ENCODE measurements at regions of chr14 and their contacts with region 1.

Region 1: DNA sequence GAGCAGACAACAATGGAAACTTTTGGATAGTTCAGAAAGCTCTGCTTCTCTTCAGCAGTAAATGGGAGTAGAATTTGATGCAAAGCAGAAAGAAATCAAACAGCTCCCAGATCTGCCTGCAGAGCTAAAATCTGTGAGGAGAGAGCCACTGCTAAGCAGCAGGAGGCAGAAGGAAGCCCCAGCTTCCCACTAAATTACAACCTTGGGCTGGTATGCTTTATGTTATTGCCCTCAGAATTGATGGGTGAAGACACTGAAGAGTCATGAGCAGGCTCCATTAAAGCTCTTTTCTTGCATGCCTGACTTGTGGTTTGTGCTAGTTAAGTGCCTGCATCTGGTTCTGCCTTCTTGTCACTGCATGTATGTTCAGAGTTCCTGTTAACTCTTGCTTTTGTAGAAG is 8.4 kb downstream of the ZC2HC1C start:
- DNase-seq: peak in 1 of 14 experiments; percentile 18
- ATAC-seq: peak; percentile 95
- H3K4me3 ChIP-seq: no peak overlapping the region
- H3K4me3 Mint-ChIP-seq: peak overlapping the region; percentile 68
- H3K27ac ChIP-seq: no peak overlapping the region
- H3K27ac Mint-ChIP-seq: peak overlapping the region; percentile 90
- H3K4me1 ChIP-seq: no peaks in the 10 kb centered on the region
- H3K4me1 Mint-ChIP-seq: peaks cover 31% of the 10 kb centered on the region
- H3K27me3 ChIP-seq: no peaks in the 10 kb centered on the region
- H3K27me3 Mint-ChIP-seq: no peaks in the 10 kb centered on the region
- CTCF ChIP-seq: no peak

Region 2: GRCh38 chr14:75044322-75044721 is 33.5 kb before region 1 on chr14:
- CTCF ChIA-PET with region 1: no interaction called
- POLR2A ChIA-PET with region 1: interaction called, 4 read pairs
- intact Hi-C with region 1: loop called in 1 of 2 experiments (anchors 5 kb)
- DNase-seq: no peak
- ATAC-seq: no peak
- H3K4me3 ChIP-seq: no peak overlapping the region
- H3K4me3 Mint-ChIP-seq: peak overlapping the region; percentile 38
- H3K27ac ChIP-seq: no peak overlapping the region
- H3K27ac Mint-ChIP-seq: no peak overlapping the region
- H3K4me1 ChIP-seq: peaks cover 2% of the 10 kb centered on the region
- H3K4me1 Mint-ChIP-seq: peaks cover 65% of the 10 kb centered on the region
- H3K27me3 ChIP-seq: no peaks in the 10 kb centered on the region
- H3K27me3 Mint-ChIP-seq: no peaks in the 10 kb centered on the region
- CTCF ChIP-seq: no peak

Region 3: DNA sequence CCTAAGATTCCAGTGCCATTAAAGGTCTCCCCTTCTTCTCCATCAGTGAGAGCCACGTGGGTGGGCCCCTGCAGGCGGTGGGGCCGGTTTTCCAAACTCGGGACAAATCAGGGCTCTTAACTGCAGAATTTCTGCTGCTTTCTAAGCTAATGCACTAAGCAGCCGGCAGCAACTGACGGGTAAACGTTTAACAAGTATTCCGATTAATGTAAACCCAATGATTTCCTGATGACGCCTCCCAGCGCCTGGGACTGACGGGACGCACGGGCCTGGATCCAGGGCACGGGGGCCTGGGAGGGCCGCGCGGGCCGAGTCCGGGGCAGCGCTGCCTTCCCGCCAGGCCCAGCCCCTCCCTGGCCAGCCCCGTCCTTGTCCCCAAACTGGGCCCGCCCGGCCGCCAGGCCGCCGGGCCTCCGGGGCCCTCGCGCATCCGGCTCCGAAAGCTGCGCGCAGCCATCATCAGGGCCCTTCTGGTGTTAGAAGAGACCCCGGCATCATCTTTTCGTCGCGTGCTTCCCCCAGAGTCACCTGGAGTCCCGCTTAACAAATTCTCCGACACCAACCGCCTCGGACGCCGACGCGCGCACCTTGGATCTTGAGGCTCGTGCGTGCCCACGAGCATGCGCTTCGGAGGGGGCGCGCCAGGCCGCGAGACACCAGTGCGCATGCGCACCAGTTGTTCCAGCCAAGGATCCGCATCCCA is 26.8 kb before region 1 on chr14 and contains the start of gene MLH3:
- CTCF ChIA-PET with region 1: interaction called, 4 read pairs
- POLR2A ChIA-PET with region 1: interaction called, 13 read pairs
- intact Hi-C with region 1: no loop called
- DNase-seq: peak; percentile 64 to 92 (median 76)
- ATAC-seq: peak; percentile 80
- H3K4me3 ChIP-seq: peak within 1 kb of the TSS; percentile 70
- H3K4me3 Mint-ChIP-seq: peak within 1 kb of the TSS; percentile 96
- H3K27ac ChIP-seq: peak within 1 kb of the TSS in 1 of 2 donors; percentile 66
- H3K27ac Mint-ChIP-seq: peak within 1 kb of the TSS; percentile 84
- H3K4me1 ChIP-seq: peaks cover 15% of the 10 kb centered on the region
- H3K4me1 Mint-ChIP-seq: peaks cover 55% of the 10 kb centered on the region
- H3K27me3 ChIP-seq: no peaks in the 10 kb centered on the region
- H3K27me3 Mint-ChIP-seq: no peaks in the 10 kb centered on the region
- CTCF ChIP-seq: no peak
- total RNA-seq, gene MLH3: 13.2 to 14.4 TPM

Region 4: GRCh38 chr14:75063407-75064213 is 14.2 kb before region 1 on chr14 and contains the start of gene ACYP1:
- CTCF ChIA-PET with region 1: no interaction called
- POLR2A ChIA-PET with region 1: interaction called, 18 read pairs
- intact Hi-C with region 1: no loop called
- DNase-seq: peak; percentile 81 to 93 (median 87)
- ATAC-seq: peak; percentile 99
- H3K4me3 ChIP-seq: peak within 1 kb of the TSS; percentile 88
- H3K4me3 Mint-ChIP-seq: peak within 1 kb of the TSS; percentile 98
- H3K27ac ChIP-seq: peak within 1 kb of the TSS; percentile 59 to 78
- H3K27ac Mint-ChIP-seq: peak within 1 kb of the TSS; percentile 93
- H3K4me1 ChIP-seq: peaks cover 22% of the 10 kb centered on the region
- H3K4me1 Mint-ChIP-seq: peaks cover 46% of the 10 kb centered on the region
- H3K27me3 ChIP-seq: no peaks in the 10 kb centered on the region
- H3K27me3 Mint-ChIP-seq: no peaks in the 10 kb centered on the region
- CTCF ChIP-seq: no peak
- total RNA-seq, gene ACYP1: 7.9 to 9.4 TPM

Region 5: GRCh38 chr14:75088574-75089373 is 11.0 kb after region 1 on chr14:
- CTCF ChIA-PET with region 1: interaction called, 3 read pairs
- POLR2A ChIA-PET with region 1: interaction called, 10 read pairs
- intact Hi-C with region 1: no loop called
- DNase-seq: peak in 10 of 14 experiments; percentile 8 to 71 (median 31)
- ATAC-seq: peak; percentile 72
- H3K4me3 ChIP-seq: no peak overlapping the region
- H3K4me3 Mint-ChIP-seq: no peak overlapping the region
- H3K27ac ChIP-seq: no peak overlapping the region
- H3K27ac Mint-ChIP-seq: no peak overlapping the region
- H3K4me1 ChIP-seq: no peaks in the 10 kb centered on the region
- H3K4me1 Mint-ChIP-seq: no peaks in the 10 kb centered on the region
- H3K27me3 ChIP-seq: no peaks in the 10 kb centered on the region
- H3K27me3 Mint-ChIP-seq: no peaks in the 10 kb centered on the region
- CTCF ChIP-seq: peak; percentile 84

Region 6: GRCh38 chr14:75101491-75101890 is 23.7 kb after region 1 on chr14:
- CTCF ChIA-PET with region 1: no interaction called
- POLR2A ChIA-PET with region 1: no interaction called
- intact Hi-C with region 1: no loop called
- DNase-seq: no peak
- ATAC-seq: no peak
- H3K4me3 ChIP-seq: no peak overlapping the region
- H3K4me3 Mint-ChIP-seq: no peak overlapping the region
- H3K27ac ChIP-seq: no peak overlapping the region
- H3K27ac Mint-ChIP-seq: no peak overlapping the region
- H3K4me1 ChIP-seq: no peaks in the 10 kb centered on the region
- H3K4me1 Mint-ChIP-seq: peaks cover 6% of the 10 kb centered on the region
- H3K27me3 ChIP-seq: no peaks in the 10 kb centered on the region
- H3K27me3 Mint-ChIP-seq: no peaks in the 10 kb centered on the region
- CTCF ChIP-seq: no peak

Measured in CD4-positive, alpha-beta T cell (primary cell).